OCI-LY7 (cell line): ENCODE measurements at regions of chr6 and their contacts with region 1.

Region 1: GRCh38 chr6:30672445-30673253 is at the start of gene DHX16:
- DNase-seq: peak; percentile 97
- H3K4me3 ChIP-seq: peak within 1 kb of the TSS; percentile 89
- H3K27ac ChIP-seq: no peak within 1 kb of the TSS
- H3K4me1 ChIP-seq: peaks cover 12% of the 10 kb centered on the region
- CTCF ChIP-seq: peak; percentile 97
- total RNA-seq, gene DHX16: 27.1 and 30.5 TPM in 2 replicates

Region 2: DNA sequence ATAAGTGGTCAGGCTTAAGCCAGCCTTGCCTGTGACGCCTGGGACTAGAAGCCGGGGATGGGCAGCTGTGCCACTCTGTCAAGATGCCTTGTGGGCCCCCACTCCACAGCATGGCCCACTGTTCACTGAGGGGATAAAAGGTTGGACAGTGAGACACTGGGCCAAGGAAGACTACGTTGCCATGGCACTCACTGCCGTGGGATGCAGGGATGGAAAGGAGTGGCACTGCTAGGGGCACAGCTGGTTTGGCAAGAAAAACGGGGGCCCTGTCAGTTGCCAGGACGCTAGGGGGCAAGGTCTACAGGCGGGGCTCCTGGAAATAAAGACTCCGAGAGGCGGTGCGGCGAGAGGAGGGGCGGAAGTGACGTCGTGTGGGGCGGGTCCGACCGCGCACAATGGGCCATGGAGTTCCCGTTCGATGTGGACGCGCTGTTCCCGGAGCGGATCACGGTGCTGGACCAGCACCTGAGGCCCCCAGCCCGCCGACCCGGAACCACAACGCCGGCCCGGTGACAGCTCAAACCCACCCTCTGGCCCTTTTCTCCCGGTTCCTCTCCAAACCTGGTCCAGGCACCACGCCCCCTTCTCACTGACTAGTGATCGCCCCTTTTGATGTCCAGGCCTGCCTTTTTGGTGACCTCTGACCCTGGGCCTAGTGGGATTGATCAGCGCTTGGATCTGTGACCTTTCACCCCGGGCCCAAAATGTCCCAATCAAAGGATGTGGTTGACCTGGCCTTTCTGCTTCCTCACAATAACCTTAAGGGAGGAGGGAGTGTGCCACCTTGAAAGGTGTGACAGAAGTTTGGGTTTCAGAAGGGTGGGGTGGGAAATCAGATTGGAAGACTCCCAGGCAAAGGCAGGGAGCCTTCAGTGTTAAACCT is 45.9 kb before region 1 on chr6 and contains the start of gene ATAT1:
- CTCF ChIA-PET with region 1: no interaction called
- POLR2A ChIA-PET with region 1: no interaction called
- intact Hi-C with region 1: loop called (anchors 2 kb)
- DNase-seq: peak; percentile 87
- H3K4me3 ChIP-seq: peak within 1 kb of the TSS; percentile 87
- H3K27ac ChIP-seq: peak within 1 kb of the TSS; percentile 32
- H3K4me1 ChIP-seq: peaks cover 15% of the 10 kb centered on the region
- CTCF ChIP-seq: peak; percentile 69
- total RNA-seq, gene ATAT1: 4.7 and 10.4 TPM in 2 replicates